Activated naive CD4-positive, alpha-beta T cell treated with anti-CD3 and anti-CD28 coated beads for 36 hours (primary cell): ENCODE measurements at regions of chr15 and their contacts with region 1.

Region 1: GRCh38 chr15:41331833-41332787 is at the start of gene OIP5:
- DNase-seq: peak; percentile 100
- H3K4me3 Mint-ChIP-seq: peak within 1 kb of the TSS; percentile 100
- H3K27ac Mint-ChIP-seq: peak within 1 kb of the TSS; percentile 98
- H3K4me1 Mint-ChIP-seq: peaks cover 26% of the 10 kb centered on the region
- H3K27me3 Mint-ChIP-seq: no peaks in the 10 kb centered on the region
- total RNA-seq, gene OIP5: 9.5 to 10.7 TPM

Region 2: DNA sequence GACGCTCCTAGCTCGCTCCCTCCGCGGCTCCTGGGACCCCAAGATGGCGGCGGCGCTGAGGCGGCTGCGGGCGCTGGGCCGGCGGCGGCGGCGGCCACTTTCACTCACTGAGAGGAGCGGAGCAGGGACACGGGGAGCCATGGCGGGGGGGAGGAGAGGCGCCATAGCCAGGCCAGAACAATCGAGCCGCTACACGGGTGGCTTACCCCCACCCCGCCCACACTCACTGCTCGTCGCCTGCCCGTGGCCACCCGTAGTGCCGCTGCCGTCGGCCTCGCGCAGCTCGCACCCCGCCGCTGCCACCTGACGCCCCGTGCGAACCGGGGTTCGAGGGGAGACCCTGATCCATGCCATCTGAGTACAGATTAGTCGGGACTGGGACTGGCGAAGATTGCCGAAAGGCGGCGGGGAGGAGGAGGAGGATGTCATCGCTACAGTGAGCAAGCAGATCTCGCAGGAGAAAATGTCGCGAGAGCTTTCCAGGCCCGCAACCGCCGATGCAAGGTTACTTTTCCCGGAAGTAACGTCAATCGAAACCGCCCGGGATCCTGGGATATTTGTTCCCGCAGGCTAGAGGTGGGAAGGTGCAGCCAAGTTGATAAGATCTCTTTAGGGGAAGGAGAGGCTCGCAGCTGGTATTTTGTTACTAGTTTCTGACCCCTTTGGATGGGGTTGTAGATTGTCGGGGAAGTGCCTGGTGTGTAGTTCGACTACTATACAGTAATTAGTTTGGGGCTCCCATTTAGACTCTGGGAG is 215.8 kb before region 1 on chr15 and contains the start of gene INO80:
- CTCF ChIA-PET with region 1: no interaction called
- intact Hi-C with region 1: loop called (anchors 1 kb)
- DNase-seq: peak; percentile 99
- H3K4me3 Mint-ChIP-seq: peak within 1 kb of the TSS; percentile 88
- H3K27ac Mint-ChIP-seq: peak within 1 kb of the TSS; percentile 96
- H3K4me1 Mint-ChIP-seq: peaks cover 21% of the 10 kb centered on the region
- H3K27me3 Mint-ChIP-seq: no peaks in the 10 kb centered on the region
- total RNA-seq, gene INO80: 14.0 to 16.8 TPM

Region 3: DNA sequence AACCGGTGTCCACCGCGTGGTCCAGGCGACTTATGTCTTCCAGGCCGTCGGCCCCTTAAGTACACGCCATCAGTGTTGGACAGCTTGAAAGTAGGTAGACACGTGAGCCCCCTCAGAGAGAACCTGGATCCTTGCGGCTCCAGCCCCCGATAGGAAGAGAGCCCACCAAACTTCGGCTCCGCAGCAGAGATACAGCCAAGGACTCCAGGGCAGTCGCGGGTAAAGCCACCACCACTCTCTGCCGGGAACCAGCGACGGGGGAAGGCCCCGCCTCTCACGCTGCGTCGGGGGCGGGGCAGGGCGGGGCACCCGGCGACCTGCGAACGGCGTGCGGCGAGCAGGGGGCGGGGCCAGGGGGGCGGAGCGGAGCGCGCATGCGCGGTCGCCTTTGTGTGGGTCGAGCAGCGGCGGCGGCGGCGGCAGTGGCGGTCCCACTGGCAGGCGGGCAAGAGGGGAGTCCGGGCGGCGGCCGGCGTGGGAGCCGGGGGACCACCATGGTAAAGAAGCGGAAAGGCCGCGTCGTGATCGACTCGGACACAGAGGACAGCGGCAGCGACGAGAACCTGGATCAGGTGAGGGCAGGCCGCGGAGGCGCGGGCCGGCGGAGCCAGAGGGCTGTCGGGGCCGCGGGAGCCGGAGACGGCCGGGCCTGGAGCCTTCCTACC is 84.8 kb after region 1 on chr15 and contains the start of gene RTF1:
- CTCF ChIA-PET with region 1: no interaction called
- intact Hi-C with region 1: loop called (anchors 2 kb)
- DNase-seq: peak; percentile 95
- H3K4me3 Mint-ChIP-seq: peak within 1 kb of the TSS; percentile 87
- H3K27ac Mint-ChIP-seq: peak within 1 kb of the TSS; percentile 89
- H3K4me1 Mint-ChIP-seq: peaks cover 43% of the 10 kb centered on the region
- H3K27me3 Mint-ChIP-seq: no peaks in the 10 kb centered on the region
- total RNA-seq, gene RTF1: 18.7 to 19.5 TPM